ENCODE measurements at regions of chr1 and their contacts with region 1.

Region 1: GRCh38 chr1:183407961-183408360 is 10.2 kb downstream of the NMNAT2 start:
- DNase-seq: no peak
- ATAC-seq: peak in 3 of 4 donors; percentile 45 to 62 (median 55)
- H3K4me3 ChIP-seq: no peak overlapping the region
- H3K27ac ChIP-seq: peak overlapping the region in 6 of 12 donors; percentile 11 to 46 (median 34)
- H3K4me1 ChIP-seq: peaks cover 0 to 8% (median 0%) of the 10 kb centered on the region in 12 donors
- H3K27me3 ChIP-seq: no peaks in the 10 kb centered on the region
- CTCF ChIP-seq: no peak
- POLR2A ChIP-seq: no peak

Region 2: DNA sequence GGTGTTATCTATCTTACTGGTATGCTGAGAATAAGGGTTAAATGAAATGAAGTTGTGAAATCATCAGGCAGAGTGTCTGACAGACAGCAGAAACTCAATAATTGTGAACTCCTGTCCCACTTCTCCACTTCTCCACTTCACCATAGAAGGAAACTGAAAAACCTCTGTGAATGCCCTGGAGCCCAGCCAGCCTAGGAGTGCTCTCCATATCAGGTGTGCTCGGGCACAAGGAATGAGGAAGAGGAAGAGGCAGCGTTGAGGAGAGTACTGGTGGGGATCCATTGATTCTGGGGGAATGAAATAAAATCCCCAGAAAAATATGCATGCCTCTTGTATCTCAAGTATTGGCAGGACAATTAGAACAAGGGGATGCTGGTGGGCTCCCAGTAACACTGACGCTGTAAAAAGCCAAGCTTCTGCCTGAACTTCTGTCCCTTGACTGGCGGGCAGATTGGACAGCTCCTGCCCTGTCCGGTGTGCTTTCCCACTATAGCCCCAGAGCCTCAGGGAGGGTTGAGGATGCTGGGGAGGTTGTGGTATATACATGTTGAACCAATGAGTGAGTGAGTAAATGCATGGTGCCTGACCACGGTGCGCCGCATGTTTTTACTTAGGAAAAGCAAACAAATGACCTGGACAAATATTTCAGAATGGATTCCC is 37.4 kb before region 1 on chr1:
- intact Hi-C with region 1: loop called in 1 of 10 experiments (anchors 5 kb)
- DNase-seq: no peak
- ATAC-seq: no peak
- H3K4me3 ChIP-seq: no peak overlapping the region
- H3K27ac ChIP-seq: no peak overlapping the region
- H3K4me1 ChIP-seq: peaks cover 0 to 22% (median 2%) of the 10 kb centered on the region in 12 donors
- H3K27me3 ChIP-seq: no peaks in the 10 kb centered on the region
- CTCF ChIP-seq: no peak
- POLR2A ChIP-seq: no peak

Measured in heart left ventricle (tissue), 16 donors.